MCF 10A (cell line): ENCODE measurements at regions of chr18 and their contacts with region 1.

Region 1: DNA sequence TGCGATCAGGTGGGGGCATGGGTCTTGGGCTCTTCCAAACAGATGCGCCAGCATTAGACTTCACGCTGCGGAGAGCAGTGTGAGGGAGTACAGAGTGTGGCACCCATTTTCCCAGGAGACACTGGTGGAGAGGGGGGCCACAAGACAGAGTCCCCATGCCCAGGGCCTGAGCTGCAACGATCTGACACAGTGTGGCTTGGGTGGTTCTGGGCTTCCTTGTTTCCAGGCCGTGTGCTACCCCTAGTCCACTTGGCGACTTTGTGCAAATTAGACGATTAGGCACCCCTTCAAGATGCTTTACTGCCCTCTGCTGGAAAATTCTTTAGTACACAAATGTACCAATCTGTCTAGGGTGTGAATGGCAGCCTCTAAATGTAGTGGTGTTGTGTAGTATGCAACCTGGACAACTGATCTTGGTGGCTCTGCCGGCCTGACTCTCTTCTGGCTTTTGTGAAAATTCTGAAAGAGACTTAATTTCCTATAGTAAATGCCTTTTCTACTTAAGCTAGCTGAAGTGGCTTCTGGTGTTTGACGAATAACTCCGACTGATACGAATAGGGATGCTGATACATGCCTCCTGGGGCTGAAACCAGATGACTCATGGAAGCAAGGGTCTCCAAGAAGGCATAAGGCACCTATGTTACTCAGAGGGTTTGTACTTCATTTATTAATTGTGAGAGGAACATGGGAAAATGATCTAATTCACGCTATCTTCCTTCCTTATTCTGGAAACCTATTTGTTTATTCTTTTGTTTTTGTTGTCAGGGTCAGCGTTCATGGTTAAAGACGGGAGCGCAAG is 92.3 kb upstream of the SMAD2 start:
- DNase-seq: peak; percentile 83
- H3K4me3 Mint-ChIP-seq: no peak overlapping the region
- H3K27ac Mint-ChIP-seq: no peak overlapping the region
- H3K4me1 Mint-ChIP-seq: peaks cover 26% of the 10 kb centered on the region
- H3K27me3 Mint-ChIP-seq: no peaks in the 10 kb centered on the region
- CTCF ChIP-seq: peak; percentile 66

Region 2: DNA sequence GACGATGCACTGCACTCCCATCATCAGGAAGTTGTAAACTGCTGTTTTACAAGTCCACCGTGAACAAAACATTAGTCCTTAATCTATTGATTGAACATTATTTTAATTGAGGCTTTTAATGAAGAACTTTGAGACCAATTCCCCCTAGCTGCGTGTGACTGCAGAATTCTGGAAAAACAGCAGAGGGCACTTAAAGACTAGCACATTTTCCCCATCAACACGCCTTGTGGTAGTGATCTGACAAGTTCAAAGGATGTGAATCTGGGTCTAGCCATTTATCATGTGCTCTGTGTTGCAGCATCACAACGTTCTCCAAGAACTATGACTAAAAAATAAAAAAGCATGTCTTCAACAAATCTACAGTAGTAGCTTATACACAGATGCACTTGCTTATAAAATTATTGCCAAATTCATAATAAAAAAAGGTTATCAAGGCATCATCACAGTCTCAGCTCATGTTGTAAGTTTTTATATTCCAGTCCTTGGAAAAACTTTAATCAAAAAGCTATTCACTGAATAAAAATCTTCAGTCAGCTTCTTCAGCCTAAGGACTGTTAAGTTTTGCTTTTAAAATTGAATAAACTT is 807.1 kb before region 1 on chr18:
- CTCF ChIA-PET with region 1: interaction called, 3 read pairs
- POLR2A ChIA-PET with region 1: no interaction called
- intact Hi-C with region 1: loop called (anchors 10 kb)
- DNase-seq: peak; percentile 61
- H3K4me3 Mint-ChIP-seq: no peak overlapping the region
- H3K27ac Mint-ChIP-seq: no peak overlapping the region
- H3K4me1 Mint-ChIP-seq: no peaks in the 10 kb centered on the region
- H3K27me3 Mint-ChIP-seq: peaks cover 82% of the 10 kb centered on the region
- CTCF ChIP-seq: peak; percentile 59

Region 3: GRCh38 chr18:47772374-47773248 is 250.1 kb before region 1 on chr18:
- CTCF ChIA-PET with region 1: interaction called, 4 read pairs
- POLR2A ChIA-PET with region 1: no interaction called
- intact Hi-C with region 1: loop called (anchors 1 kb)
- DNase-seq: peak; percentile 83
- H3K4me3 Mint-ChIP-seq: no peak overlapping the region
- H3K27ac Mint-ChIP-seq: no peak overlapping the region
- H3K4me1 Mint-ChIP-seq: no peaks in the 10 kb centered on the region
- H3K27me3 Mint-ChIP-seq: peaks cover 40% of the 10 kb centered on the region
- CTCF ChIP-seq: peak; percentile 93

Region 4: DNA sequence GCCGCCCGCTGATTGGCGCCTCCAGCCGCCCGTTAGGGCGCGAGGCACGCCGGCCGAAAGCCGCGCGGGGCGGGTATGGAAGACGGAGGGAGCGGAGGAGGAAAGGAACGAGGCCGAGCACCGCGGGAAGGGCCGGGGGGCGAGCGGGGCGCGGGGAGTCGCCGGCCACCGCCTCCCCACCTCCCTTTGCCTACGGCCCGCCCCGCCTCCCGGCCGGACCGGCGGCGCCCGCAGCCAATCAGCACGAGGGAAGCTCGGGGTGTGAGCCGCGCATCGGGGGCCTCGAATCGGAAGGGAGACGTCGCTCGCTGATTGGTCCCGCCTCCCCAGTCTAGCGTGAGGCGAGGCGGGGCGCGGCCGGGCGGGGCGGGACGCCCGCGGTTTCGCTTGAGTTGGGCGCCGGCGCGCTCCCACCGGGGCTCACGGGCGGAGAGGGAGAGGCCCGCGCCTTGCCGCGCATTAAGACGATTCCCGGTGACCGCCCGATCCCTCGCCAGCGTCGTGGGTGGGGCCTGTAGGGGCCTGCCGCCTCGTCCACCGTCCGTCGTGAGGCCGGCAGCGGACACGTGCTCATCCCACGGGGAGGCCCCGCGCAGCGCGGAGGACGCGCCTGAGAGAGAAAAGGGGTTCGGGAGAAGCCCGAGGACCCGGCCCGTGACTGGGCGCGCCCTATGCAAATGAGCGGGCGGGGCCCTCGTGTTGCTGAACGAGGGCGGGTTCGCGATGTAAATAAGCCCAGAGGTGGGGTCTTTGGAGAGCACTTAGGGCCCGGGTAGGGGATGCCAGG is 91.6 kb before region 1 on chr18:
- CTCF ChIA-PET with region 1: no interaction called
- POLR2A ChIA-PET with region 1: interaction called, 4 read pairs
- intact Hi-C with region 1: loop called (anchors 1 kb)
- DNase-seq: peak; percentile 97
- H3K4me3 Mint-ChIP-seq: peak overlapping the region; percentile 86
- H3K27ac Mint-ChIP-seq: peak overlapping the region; percentile 91
- H3K4me1 Mint-ChIP-seq: peaks cover 37% of the 10 kb centered on the region
- H3K27me3 Mint-ChIP-seq: no peaks in the 10 kb centered on the region
- CTCF ChIP-seq: no peak

Region 5: DNA sequence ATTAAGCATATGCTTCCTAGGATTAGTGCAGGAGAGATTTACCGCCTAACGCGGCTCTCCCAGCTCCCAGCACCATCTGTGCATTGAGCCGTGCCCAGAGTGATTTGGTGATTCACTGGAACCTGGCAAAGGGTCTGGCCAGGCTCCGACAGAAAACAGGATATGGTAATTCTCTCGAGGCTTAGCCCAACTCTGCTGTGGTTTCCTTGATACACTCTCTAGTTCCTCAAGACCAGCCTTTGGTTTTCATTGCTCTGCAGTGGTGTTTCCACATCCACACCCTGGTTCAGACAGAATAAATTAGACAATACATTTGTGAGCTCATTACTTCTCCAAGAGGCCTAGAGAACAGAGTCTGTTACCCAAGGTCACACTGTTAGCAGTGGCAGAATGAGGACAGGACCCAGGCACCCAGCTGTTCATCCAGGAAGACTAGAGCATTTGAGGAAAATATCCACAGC is 69.2 kb before region 1 on chr18:
- CTCF ChIA-PET with region 1: no interaction called
- POLR2A ChIA-PET with region 1: no interaction called
- intact Hi-C with region 1: no loop called
- DNase-seq: peak; percentile 81
- H3K4me3 Mint-ChIP-seq: no peak overlapping the region
- H3K27ac Mint-ChIP-seq: peak overlapping the region; percentile 81
- H3K4me1 Mint-ChIP-seq: peaks cover 8% of the 10 kb centered on the region
- H3K27me3 Mint-ChIP-seq: peaks cover 1% of the 10 kb centered on the region
- CTCF ChIP-seq: no peak

Region 6: GRCh38 chr18:48470484-48471180 is 447.9 kb after region 1 on chr18:
- CTCF ChIA-PET with region 1: interaction called, 4 read pairs
- POLR2A ChIA-PET with region 1: no interaction called
- intact Hi-C with region 1: loop called (anchors 1 kb)
- DNase-seq: no peak
- H3K4me3 Mint-ChIP-seq: no peak overlapping the region
- H3K27ac Mint-ChIP-seq: no peak overlapping the region
- H3K4me1 Mint-ChIP-seq: peaks cover 5% of the 10 kb centered on the region
- H3K27me3 Mint-ChIP-seq: peaks cover 16% of the 10 kb centered on the region
- CTCF ChIP-seq: no peak